ENCODE measurements at regions of chr11 and their contacts with region 1.

Region 1: DNA sequence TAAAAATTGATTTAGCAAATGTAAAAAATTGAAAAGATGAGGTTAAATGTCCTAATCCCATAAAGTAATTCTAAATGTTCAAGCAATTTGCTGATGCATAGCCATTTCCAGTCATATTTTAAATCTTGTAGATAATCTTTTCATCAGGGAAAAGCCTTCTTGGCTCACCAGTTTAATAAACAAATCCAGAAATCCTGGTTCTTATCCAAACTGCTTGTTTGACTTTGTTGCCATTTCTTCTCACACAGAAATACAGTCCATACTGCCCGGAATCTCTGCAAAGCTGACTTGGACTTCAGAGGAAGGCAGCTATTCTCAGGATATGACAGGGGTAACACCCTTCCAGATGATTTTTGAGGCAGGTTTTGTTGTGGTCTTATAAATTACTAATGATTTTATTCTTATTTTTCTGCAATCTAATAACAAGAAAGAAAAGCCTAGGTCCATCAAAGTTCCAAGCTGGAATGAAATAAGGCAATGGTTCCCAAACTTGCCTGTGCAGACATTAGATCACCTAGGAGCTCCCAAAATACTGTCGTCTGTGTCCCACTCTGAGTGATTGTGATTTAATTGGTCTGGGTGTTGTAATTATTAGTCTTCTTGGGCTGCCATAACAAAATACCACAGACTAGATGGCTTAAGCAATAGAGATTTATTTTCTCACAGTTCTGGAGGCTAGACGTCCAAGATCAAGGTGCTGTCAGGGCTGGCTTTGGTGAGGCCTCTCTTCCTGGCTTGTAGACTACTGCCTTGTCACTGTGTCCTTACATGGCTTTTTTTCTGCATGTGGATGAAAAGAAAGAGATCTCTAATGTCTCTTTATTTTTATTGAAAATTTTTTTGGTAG is 55.1 kb upstream of the RCE1 start:
- DNase-seq: no peak
- H3K4me3 ChIP-seq: no peak overlapping the region
- H3K4me3 Mint-ChIP-seq: no peak overlapping the region
- H3K27ac Mint-ChIP-seq: no peak overlapping the region
- H3K4me1 ChIP-seq: peaks cover 37% of the 10 kb centered on the region
- H3K4me1 Mint-ChIP-seq: peaks cover 45% of the 10 kb centered on the region
- H3K27me3 ChIP-seq: no peaks in the 10 kb centered on the region
- H3K27me3 Mint-ChIP-seq: no peaks in the 10 kb centered on the region
- CTCF ChIP-seq: no peak

Region 2: DNA sequence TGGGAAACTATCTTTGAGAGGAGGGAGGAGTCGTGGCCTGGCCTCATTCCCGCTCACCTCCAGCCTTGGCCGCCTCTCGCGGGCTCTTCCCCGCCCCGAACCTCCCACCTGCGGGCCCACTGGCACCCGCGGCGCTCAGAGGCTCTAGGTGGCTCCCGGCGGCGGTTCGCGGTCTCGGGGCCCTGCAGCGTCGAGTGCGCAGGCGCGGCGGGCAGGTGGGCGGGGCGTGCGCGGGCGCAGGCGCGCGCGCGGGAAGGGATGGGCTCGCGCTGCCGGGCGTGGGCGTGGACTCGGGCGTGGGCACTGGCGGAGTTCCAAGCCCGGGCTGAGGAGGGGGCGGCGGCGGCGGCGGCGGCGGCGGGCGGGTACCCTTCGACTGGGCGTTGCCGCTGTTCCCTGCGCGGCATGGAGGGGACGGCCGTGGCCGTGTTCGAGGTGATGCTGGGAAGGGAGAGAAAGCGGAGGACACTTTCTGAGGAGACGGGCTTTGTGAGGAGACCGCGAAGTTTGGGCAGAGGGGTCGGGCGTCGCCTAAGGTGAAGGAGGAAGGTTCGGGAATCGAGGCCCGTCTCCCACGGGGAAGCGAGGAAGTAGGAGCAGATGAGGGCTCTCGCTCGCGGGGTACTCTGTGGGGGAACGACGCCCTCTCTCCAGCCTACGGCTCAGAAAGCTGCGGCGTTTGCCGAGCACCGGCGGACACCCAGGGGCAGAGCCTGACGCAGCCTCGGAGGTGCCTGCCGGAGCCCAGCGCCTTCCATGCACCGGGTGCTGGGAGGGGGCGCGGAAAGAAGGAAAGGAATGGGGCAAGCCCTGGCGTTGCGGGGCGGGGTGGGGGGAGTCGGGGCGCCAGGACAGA is 43.4 kb before region 1 on chr11:
- CTCF ChIA-PET with region 1: no interaction called
- POLR2A ChIA-PET with region 1: interaction called, 17 read pairs
- intact Hi-C with region 1: loop called (anchors 1 kb)
- DNase-seq: peak; percentile 94 to 98
- H3K4me3 ChIP-seq: peak overlapping the region; percentile 84
- H3K4me3 Mint-ChIP-seq: peak overlapping the region; percentile 83
- H3K27ac Mint-ChIP-seq: peak overlapping the region; percentile 69
- H3K4me1 ChIP-seq: peaks cover 14% of the 10 kb centered on the region; the same call in 1 of the 2 replicates
- H3K4me1 Mint-ChIP-seq: peaks cover 7% of the 10 kb centered on the region
- H3K27me3 ChIP-seq: no peaks in the 10 kb centered on the region
- H3K27me3 Mint-ChIP-seq: no peaks in the 10 kb centered on the region
- CTCF ChIP-seq: no peak

Region 3: DNA sequence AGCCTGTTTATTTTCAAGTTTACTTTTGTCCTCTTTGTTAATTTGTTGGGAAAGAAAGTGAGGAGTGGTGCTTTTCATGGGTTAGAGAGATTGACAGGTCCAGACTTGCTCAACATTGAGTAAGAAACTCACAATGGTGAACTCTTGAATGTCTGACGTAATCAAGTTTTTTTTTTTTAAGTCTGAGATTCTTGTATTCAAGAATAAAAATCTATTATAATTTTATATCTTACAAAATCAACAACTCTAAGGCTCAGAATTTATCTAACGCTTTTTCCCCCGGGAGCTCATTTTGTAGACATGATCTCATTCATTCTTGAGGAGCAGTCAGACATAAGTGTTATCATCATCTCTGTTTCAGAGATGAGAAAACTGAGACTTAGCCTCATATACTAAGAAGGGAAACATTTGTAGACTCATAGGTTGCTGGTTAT is 20.0 kb before region 1 on chr11:
- CTCF ChIA-PET with region 1: no interaction called
- POLR2A ChIA-PET with region 1: no interaction called
- intact Hi-C with region 1: loop called (anchors 2 kb)
- DNase-seq: peak in 1 of 2 experiments; percentile 36
- H3K4me3 ChIP-seq: no peak overlapping the region
- H3K4me3 Mint-ChIP-seq: no peak overlapping the region
- H3K27ac Mint-ChIP-seq: no peak overlapping the region
- H3K4me1 ChIP-seq: peaks cover 3% of the 10 kb centered on the region; the same call in 1 of the 2 replicates
- H3K4me1 Mint-ChIP-seq: peaks cover 19% of the 10 kb centered on the region
- H3K27me3 ChIP-seq: no peaks in the 10 kb centered on the region
- H3K27me3 Mint-ChIP-seq: no peaks in the 10 kb centered on the region
- CTCF ChIP-seq: no peak

Region 4: DNA sequence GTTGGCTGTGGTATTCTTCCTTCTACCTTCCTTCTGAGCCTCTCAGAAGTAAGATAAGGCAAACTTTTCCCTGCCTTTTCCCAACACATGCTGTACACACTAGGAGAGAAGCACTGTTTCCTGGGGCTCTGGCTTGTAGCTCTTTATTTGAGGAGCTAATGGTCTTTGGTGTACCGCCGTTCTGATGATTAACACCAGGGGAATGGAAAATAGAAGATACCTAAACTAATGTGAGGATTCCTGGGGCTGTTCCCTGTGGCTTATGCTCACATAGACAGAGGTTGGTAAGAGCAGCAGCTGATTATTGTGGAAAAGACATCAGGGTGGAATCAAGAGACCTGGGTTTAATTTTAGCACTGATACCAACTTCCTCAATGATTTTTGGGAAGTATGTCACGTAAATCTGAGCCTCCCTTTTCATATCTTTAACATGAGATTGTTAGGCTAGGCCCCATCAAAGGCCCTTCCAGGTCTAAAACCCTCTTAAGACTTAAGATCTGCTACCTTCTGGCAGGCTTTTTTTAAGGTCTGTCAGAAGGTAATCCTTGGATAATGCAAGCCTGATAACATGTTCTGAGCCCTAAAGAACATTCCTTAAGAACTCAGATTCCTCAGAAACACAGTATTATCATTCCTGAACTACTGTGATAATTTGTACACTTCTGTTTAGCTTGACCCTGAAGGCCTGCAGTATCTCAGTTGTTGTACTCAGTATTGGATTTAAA is 30.3 kb after region 1 on chr11:
- CTCF ChIA-PET with region 1: no interaction called
- POLR2A ChIA-PET with region 1: no interaction called
- intact Hi-C with region 1: loop called (anchors 1 kb)
- DNase-seq: peak in 1 of 2 experiments; percentile 51
- H3K4me3 ChIP-seq: no peak overlapping the region
- H3K4me3 Mint-ChIP-seq: no peak overlapping the region
- H3K27ac Mint-ChIP-seq: peak overlapping the region; percentile 48
- H3K4me1 ChIP-seq: peaks cover 41% of the 10 kb centered on the region
- H3K4me1 Mint-ChIP-seq: peaks cover 13% of the 10 kb centered on the region
- H3K27me3 ChIP-seq: no peaks in the 10 kb centered on the region
- H3K27me3 Mint-ChIP-seq: no peaks in the 10 kb centered on the region
- CTCF ChIP-seq: no peak

Region 5: GRCh38 chr11:66929753-66930152 is 141.6 kb after region 1 on chr11:
- CTCF ChIA-PET with region 1: no interaction called
- POLR2A ChIA-PET with region 1: no interaction called
- intact Hi-C with region 1: no loop called
- DNase-seq: no peak
- H3K4me3 ChIP-seq: no peak overlapping the region
- H3K4me3 Mint-ChIP-seq: no peak overlapping the region
- H3K27ac Mint-ChIP-seq: no peak overlapping the region
- H3K4me1 ChIP-seq: peaks cover 9% of the 10 kb centered on the region; the same call in 1 of the 2 replicates
- H3K4me1 Mint-ChIP-seq: peaks cover 26% of the 10 kb centered on the region
- H3K27me3 ChIP-seq: no peaks in the 10 kb centered on the region
- H3K27me3 Mint-ChIP-seq: no peaks in the 10 kb centered on the region
- CTCF ChIP-seq: no peak

Measured in Caco-2 (cell line).